Panc1 (cell line): ENCODE measurements at regions of chr16 and their contacts with region 1.

Region 1: GRCh38 chr16:234468-235305 is at the start of gene FAM234A:
- DNase-seq: peak; percentile 50
- ATAC-seq: peak; percentile 94
- H3K4me3 ChIP-seq: peak within 1 kb of the TSS; percentile 92 to 98
- H3K27ac ChIP-seq: peak within 1 kb of the TSS; percentile 91
- H3K4me1 ChIP-seq: no peaks in the 10 kb centered on the region
- H3K27me3 ChIP-seq: no peaks in the 10 kb centered on the region
- CTCF ChIP-seq: no peak; the same call in 1 of the 2 replicates
- total RNA-seq, gene FAM234A: 121 TPM

Region 2: DNA sequence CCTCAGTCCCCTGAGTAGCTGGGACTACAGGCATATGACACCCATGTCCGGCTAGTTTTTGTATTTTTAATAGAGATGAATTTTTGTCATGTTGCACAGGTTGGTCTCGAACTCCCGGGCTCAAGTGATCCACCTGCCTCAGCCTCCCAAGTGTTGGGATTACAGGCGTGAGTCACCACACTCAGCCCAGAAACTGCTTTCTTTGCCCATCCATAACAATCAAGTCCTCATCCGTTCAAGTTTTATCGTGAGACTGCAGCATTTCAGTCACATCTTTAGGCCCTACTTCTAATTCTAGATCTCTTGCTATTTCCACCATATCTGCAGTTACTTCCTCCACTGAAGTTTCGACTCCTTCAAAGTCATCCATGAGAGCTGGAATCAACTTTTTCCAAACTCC is 102.6 kb before region 1 on chr16:
- CTCF ChIA-PET with region 1: interaction called, 6 read pairs
- POLR2A ChIA-PET with region 1: interaction called, 11 read pairs
- in situ Hi-C with region 1: no loop called
- intact Hi-C with region 1: no loop called
- DNase-seq: no peak
- ATAC-seq: no peak
- H3K4me3 ChIP-seq: no peak overlapping the region
- H3K27ac ChIP-seq: no peak overlapping the region
- H3K4me1 ChIP-seq: peaks cover 7% of the 10 kb centered on the region; the same call in 1 of the 2 replicates
- H3K27me3 ChIP-seq: no peaks in the 10 kb centered on the region
- CTCF ChIP-seq: no peak

Region 3: DNA sequence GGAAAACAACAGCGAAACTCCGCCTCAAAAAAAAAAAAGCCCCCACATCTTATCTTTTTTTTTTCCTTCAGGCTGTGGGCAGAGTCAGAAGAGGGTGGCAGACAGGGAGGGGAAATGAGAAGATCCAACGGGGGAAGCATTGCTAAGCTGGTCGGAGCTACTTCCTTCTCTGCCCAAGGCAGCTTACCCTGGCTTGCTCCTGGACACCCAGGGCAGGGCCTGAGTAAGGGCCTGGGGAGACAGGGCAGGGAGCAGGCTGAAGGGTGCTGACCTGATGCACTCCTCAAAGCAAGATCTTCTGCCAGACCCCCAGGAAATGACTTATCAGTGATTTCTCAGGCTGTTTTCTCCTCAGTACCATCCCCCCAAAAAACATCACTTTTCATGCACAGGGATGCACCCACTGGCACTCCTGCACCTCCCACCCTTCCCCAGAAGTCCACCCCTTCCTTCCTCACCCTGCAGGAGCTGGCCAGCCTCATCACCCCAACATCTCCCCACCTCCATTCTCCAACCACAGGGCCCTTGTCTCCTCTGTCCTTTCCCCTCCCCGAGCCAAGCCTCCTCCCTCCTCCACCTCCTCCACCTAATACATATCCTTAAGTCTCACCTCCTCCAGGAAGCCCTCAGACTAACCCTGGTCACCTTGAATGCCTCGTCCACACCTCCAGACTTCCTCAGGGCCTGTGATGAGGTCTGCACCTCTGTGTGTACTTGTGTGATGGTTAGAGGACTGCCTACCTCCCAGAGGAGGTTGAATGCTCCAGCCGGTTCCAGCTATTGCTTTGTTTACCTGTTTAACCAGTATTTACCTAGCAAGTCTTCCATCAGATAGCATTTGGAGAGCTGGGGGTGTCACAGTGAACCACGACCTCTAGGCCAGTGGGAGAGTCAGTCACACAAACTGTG is 59.4 kb before region 1 on chr16:
- CTCF ChIA-PET with region 1: no interaction called
- POLR2A ChIA-PET with region 1: no interaction called
- in situ Hi-C with region 1: no loop called
- intact Hi-C with region 1: no loop called
- DNase-seq: no peak
- ATAC-seq: no peak
- H3K4me3 ChIP-seq: no peak overlapping the region
- H3K27ac ChIP-seq: no peak overlapping the region
- H3K4me1 ChIP-seq: peaks cover 6% of the 10 kb centered on the region; the same call in 1 of the 2 replicates
- H3K27me3 ChIP-seq: no peaks in the 10 kb centered on the region
- CTCF ChIP-seq: no peak

Region 4: DNA sequence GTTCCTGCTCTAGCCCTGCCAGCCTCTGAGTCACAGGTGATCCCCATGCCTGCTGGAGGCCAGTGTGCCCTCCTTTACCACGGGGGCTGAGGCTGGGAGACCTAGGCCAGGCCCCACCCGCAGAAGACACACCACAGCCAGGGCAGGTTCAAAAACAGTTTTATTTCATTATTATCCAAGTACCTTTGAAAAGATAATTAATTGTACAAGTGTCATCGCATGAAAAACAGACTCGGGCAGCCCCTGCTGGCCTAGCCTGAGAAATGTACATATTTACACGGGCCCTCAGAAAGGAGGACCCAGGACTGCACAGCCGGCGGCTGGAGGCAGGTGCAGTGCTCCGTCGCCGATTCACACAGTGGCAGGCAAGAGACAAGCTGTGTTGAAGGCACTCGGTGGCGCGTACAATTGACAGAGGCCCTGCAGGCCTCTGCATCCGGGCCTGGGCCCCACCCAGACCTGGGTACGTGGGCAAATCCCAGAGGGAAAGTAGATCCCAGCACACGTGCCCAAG is 52.7 kb after region 1 on chr16:
- CTCF ChIA-PET with region 1: no interaction called
- POLR2A ChIA-PET with region 1: interaction called, 12 read pairs
- in situ Hi-C with region 1: no loop called
- intact Hi-C with region 1: no loop called
- DNase-seq: no peak
- ATAC-seq: no peak
- H3K4me3 ChIP-seq: no peak overlapping the region
- H3K27ac ChIP-seq: no peak overlapping the region
- H3K4me1 ChIP-seq: no peaks in the 10 kb centered on the region
- H3K27me3 ChIP-seq: no peaks in the 10 kb centered on the region
- CTCF ChIP-seq: no peak

Region 5: GRCh38 chr16:309476-309875 is 74.8 kb after region 1 on chr16:
- CTCF ChIA-PET with region 1: no interaction called
- POLR2A ChIA-PET with region 1: interaction called, 10 read pairs
- in situ Hi-C with region 1: no loop called
- intact Hi-C with region 1: no loop called
- DNase-seq: no peak
- ATAC-seq: no peak
- H3K4me3 ChIP-seq: no peak overlapping the region
- H3K27ac ChIP-seq: no peak overlapping the region
- H3K4me1 ChIP-seq: no peaks in the 10 kb centered on the region
- H3K27me3 ChIP-seq: no peaks in the 10 kb centered on the region
- CTCF ChIP-seq: no peak

Region 6: GRCh38 chr16:352547-353403 is 118.1 kb after region 1 on chr16 and contains the start of gene AXIN1:
- CTCF ChIA-PET with region 1: interaction called, 6 read pairs
- POLR2A ChIA-PET with region 1: interaction called, 11 read pairs
- in situ Hi-C with region 1: no loop called
- intact Hi-C with region 1: no loop called
- DNase-seq: peak; percentile 39
- ATAC-seq: peak; percentile 86
- H3K4me3 ChIP-seq: peak within 1 kb of the TSS; percentile 71 to 82
- H3K27ac ChIP-seq: peak within 1 kb of the TSS; percentile 83
- H3K4me1 ChIP-seq: peaks cover 8% of the 10 kb centered on the region
- H3K27me3 ChIP-seq: no peaks in the 10 kb centered on the region
- CTCF ChIP-seq: peak; percentile 89
- total RNA-seq, gene AXIN1: 53.3 TPM